Ascending aorta (tissue), 2 donors: ENCODE measurements at regions of chr20 and their contacts with region 1.

Region 1: GRCh38 chr20:49610701-49611538 is 43.0 kb upstream of the PTGIS start:
- DNase-seq: no peak
- H3K4me3 ChIP-seq: peak overlapping the region; percentile 13 to 35
- H3K27ac ChIP-seq: no peak overlapping the region
- H3K4me1 ChIP-seq: peaks cover 0 to 11% of the 10 kb centered on the region in 2 donors
- H3K27me3 ChIP-seq: no peaks in the 10 kb centered on the region
- CTCF ChIP-seq: peak; percentile 99 to 100 (median 100)

Region 2: GRCh38 chr20:49186535-49187329 is 424.2 kb before region 1 on chr20:
- intact Hi-C with region 1: no loop called
- DNase-seq: peak in 1 of 2 donors; percentile 75
- H3K4me3 ChIP-seq: peak overlapping the region; percentile 92 to 97
- H3K27ac ChIP-seq: peak overlapping the region; percentile 93 to 98
- H3K4me1 ChIP-seq: peaks cover 0 to 7% of the 10 kb centered on the region in 2 donors
- H3K27me3 ChIP-seq: no peaks in the 10 kb centered on the region
- CTCF ChIP-seq: no peak

Region 3: DNA sequence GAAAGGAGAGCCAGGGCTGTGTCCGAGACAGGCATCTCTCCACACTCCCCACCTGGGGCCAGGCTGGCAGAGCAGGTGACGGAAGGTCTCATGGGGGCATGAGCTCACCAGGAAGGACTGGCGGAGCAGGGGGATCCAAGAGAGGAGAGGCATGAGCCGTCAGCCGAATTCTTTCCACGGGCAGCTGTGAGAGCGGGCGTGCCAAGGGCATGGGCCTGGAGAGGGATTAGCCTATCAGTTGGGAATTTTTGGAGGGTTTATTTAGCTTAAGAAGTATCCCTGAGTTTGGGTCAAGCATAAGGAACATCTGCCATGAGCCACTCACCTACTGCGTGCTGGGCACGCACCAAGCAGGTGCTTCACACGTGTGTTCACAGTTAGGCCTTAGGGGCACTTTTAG is 272.9 kb before region 1 on chr20:
- intact Hi-C with region 1: loop called (anchors 2 kb)
- DNase-seq: no peak
- H3K4me3 ChIP-seq: no peak overlapping the region
- H3K27ac ChIP-seq: no peak overlapping the region
- H3K4me1 ChIP-seq: peaks cover 0 to 3% of the 10 kb centered on the region in 2 donors
- H3K27me3 ChIP-seq: no peaks in the 10 kb centered on the region
- CTCF ChIP-seq: no peak

Region 4: GRCh38 chr20:49713753-49714712 is 103.1 kb after region 1 on chr20 and contains the start of gene B4GALT5:
- intact Hi-C with region 1: loop called (anchors 1 kb)
- DNase-seq: peak in 1 of 2 donors; percentile 76
- H3K4me3 ChIP-seq: peak within 1 kb of the TSS; percentile 95
- H3K27ac ChIP-seq: peak within 1 kb of the TSS; percentile 92 to 93
- H3K4me1 ChIP-seq: peaks cover 0 to 8% of the 10 kb centered on the region in 2 donors
- H3K27me3 ChIP-seq: no peaks in the 10 kb centered on the region
- CTCF ChIP-seq: no peak
- total RNA-seq, gene B4GALT5: 15.0 TPM

Region 5: DNA sequence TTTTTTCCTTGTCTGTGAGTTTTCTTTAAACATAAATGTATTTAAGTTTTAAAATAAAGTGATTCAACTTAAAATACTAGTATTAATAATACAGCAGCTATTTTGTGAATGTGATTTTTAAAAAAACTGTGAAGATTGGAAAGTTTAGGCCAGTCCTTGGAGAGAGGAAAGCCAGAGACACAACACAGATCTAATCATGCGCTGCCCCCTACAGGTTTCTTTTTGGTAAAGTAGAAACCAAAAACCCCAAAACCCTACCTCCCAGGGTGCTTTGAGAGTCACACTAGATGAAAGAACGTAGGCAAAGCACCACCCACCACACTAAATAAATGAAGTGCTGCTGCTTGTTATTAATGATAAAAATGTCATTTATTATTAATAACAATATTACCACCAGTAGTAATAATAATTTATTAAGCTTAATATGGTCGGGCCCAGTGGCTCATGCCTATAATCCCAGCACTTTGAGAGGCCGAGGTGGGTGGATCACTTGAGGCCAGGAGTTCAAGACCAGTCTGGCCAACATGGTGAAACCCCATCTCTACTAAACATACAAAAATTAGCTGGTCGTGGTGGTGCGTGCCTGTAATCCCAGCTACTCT is 235.4 kb after region 1 on chr20:
- intact Hi-C with region 1: loop called (anchors 1 kb)
- DNase-seq: no peak
- H3K4me3 ChIP-seq: no peak overlapping the region
- H3K27ac ChIP-seq: no peak overlapping the region
- H3K4me1 ChIP-seq: peaks cover 8 to 17% of the 10 kb centered on the region in 2 donors
- H3K27me3 ChIP-seq: no peaks in the 10 kb centered on the region
- CTCF ChIP-seq: peak; percentile 40 to 68 (median 44)

Region 6: GRCh38 chr20:49928401-49929141 is 317.7 kb after region 1 on chr20:
- intact Hi-C with region 1: loop called (anchors 2 kb)
- DNase-seq: peak in 1 of 2 donors; percentile 91
- H3K4me3 ChIP-seq: peak overlapping the region in 1 of 2 donors; percentile 27
- H3K27ac ChIP-seq: no peak overlapping the region
- H3K4me1 ChIP-seq: no peaks in the 10 kb centered on the region
- H3K27me3 ChIP-seq: no peaks in the 10 kb centered on the region
- CTCF ChIP-seq: peak; percentile 82 to 97 (median 88)